Endothelial cell of umbilical vein (primary cell): ENCODE measurements at regions of chr17 and their contacts with region 1.

Region 1: GRCh38 chr17:77054936-77055335 is 85.8 kb upstream of the SEC14L1 start:
- DNase-seq: no peak
- H3K4me3 ChIP-seq: no peak overlapping the region
- H3K27ac ChIP-seq: no peak overlapping the region
- H3K4me1 ChIP-seq: no peaks in the 10 kb centered on the region
- H3K27me3 ChIP-seq: peaks cover 5 to 6% of the 10 kb centered on the region in 2 experiments
- CTCF ChIP-seq: no peak
- POLR2A ChIP-seq: no peak

Region 2: DNA sequence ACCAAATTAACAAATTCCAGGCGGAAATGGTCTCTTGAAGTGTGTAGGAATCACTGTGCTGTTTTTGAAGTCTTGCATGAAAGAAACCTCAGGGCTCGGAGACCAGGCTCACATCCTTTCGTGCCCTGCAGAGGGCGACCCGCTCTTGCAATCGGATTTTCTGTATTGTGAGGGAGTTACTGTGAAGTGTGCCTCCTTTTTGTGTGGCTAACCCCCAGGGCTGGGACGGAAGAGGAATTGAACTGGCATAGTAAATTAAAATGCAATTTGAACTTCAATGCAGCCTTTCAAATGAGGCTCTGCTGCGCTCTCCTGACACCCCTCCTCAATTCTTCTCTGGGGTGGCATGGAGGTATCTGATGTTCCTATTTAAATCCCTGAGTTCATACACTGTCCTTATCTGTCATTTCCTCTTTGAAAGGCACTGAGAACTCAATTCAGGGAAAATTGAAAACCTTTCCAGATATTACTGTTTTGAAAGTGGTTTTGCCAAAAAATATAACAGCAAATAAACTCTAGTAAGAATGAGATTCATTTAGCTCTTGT is 238.3 kb before region 1 on chr17:
- CTCF ChIA-PET with region 1: interaction called, 68 read pairs
- POLR2A ChIA-PET with region 1: no interaction called
- dilution Hi-C with region 1: no loop called
- intact Hi-C with region 1: loop called (anchors 1 kb)
- DNase-seq: peak; percentile 41
- H3K4me3 ChIP-seq: no peak overlapping the region
- H3K27ac ChIP-seq: no peak overlapping the region
- H3K4me1 ChIP-seq: no peaks in the 10 kb centered on the region
- H3K27me3 ChIP-seq: peaks cover 0 to 3% of the 10 kb centered on the region in 2 experiments
- CTCF ChIP-seq: peak; percentile 57 to 73
- POLR2A ChIP-seq: no peak

Region 3: DNA sequence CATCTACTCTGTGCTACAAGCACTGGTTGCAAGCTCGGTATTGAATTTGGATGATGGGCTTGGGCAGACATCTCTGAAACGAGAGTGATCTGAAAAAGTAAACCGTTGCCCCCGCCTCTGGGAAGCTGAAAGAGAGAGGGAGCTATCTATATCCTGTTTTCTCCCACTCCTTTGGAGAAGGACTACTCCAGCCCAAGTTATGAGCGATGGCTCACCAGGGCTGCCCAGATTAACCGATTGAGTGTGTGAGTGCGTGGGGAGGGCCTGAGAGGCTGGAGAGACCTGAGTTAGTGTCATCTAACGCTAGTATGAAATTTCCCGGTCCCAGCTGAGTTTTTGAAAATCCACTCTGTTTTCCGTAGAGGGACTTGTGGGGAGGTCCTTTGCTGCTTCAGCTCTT is 175.2 kb before region 1 on chr17:
- CTCF ChIA-PET with region 1: interaction called, 16 read pairs
- POLR2A ChIA-PET with region 1: no interaction called
- dilution Hi-C with region 1: no loop called
- intact Hi-C with region 1: no loop called
- DNase-seq: no peak
- H3K4me3 ChIP-seq: no peak overlapping the region
- H3K27ac ChIP-seq: no peak overlapping the region
- H3K4me1 ChIP-seq: no peaks in the 10 kb centered on the region
- H3K27me3 ChIP-seq: no peaks in the 10 kb centered on the region
- CTCF ChIP-seq: no peak
- POLR2A ChIP-seq: no peak

Region 4: DNA sequence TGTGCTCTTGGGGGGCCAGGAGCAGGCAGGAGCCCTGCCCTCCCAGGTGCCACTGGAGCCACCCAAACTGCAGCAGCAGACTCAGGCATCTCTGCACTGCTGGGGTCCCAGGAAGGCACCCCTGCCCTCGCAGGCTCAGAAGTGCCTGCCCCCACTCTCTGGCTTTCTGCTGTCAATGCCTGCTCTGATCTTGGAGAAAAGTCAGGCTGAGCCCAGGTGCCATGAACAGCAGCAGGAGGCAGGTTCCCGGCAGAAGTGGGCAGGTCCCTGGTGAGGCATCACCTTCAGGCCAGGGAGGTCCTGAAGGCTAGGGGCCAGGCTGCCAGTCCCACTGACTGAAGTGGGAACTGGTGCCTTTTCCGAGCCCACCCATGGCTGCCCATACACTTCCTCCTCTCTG is 80.2 kb before region 1 on chr17:
- CTCF ChIA-PET with region 1: interaction called, 10 read pairs
- POLR2A ChIA-PET with region 1: no interaction called
- dilution Hi-C with region 1: no loop called
- intact Hi-C with region 1: no loop called
- DNase-seq: no peak
- H3K4me3 ChIP-seq: no peak overlapping the region
- H3K27ac ChIP-seq: no peak overlapping the region
- H3K4me1 ChIP-seq: no peaks in the 10 kb centered on the region
- H3K27me3 ChIP-seq: peaks cover 4 to 11% of the 10 kb centered on the region in 2 experiments
- CTCF ChIP-seq: no peak
- POLR2A ChIP-seq: no peak

Region 5: GRCh38 chr17:77011173-77012011 is 43.5 kb before region 1 on chr17:
- CTCF ChIA-PET with region 1: interaction called, 116 read pairs
- POLR2A ChIA-PET with region 1: no interaction called
- dilution Hi-C with region 1: no loop called
- intact Hi-C with region 1: loop called (anchors 1 kb)
- DNase-seq: peak; percentile 53
- H3K4me3 ChIP-seq: no peak overlapping the region
- H3K27ac ChIP-seq: no peak overlapping the region
- H3K4me1 ChIP-seq: no peaks in the 10 kb centered on the region
- H3K27me3 ChIP-seq: peaks cover 3 to 6% of the 10 kb centered on the region in 2 experiments
- CTCF ChIP-seq: peak; percentile 50 to 56
- POLR2A ChIP-seq: no peak

Region 6: GRCh38 chr17:77036807-77037381 is 18.0 kb before region 1 on chr17:
- CTCF ChIA-PET with region 1: interaction called, 83 read pairs
- POLR2A ChIA-PET with region 1: no interaction called
- dilution Hi-C with region 1: no loop called
- intact Hi-C with region 1: no loop called
- DNase-seq: no peak
- H3K4me3 ChIP-seq: no peak overlapping the region
- H3K27ac ChIP-seq: no peak overlapping the region
- H3K4me1 ChIP-seq: no peaks in the 10 kb centered on the region
- H3K27me3 ChIP-seq: no peaks in the 10 kb centered on the region
- CTCF ChIP-seq: no peak
- POLR2A ChIP-seq: no peak

Region 7: DNA sequence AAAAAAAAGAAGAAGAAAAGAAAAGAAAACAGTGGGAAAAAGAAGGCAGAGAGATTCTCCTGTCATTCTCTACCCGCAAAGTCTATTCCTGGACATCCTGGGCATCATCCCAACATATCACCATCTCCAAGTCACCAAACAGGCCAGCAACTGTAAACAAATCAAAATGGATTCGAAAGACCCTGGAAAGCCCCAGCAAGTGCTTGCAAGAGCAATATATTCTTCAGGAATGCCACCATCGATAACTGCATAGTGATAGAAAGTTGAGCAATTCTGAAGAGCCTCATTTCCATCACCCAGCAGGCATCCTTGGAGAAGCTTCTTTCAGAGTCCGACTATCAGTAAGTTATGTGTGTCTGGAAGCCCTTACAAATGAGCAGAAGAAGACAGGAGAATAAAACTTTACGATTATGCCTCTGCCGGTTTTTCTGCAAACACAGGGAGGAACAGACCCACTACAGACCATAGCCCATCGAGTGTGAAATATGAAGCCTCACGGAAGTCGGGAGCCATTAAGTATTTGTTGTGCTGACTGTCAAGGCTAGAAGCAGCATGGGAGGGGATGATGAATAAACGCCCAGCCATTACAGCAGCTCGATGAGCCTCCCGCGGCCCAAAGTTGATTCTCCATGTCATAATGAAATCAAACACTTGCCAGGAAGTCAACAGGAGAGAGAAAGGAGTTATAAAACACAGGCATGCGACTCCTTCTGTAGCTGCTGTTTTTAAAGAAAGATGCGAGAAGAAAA is 21.4 kb after region 1 on chr17:
- CTCF ChIA-PET with region 1: interaction called, 116 read pairs
- POLR2A ChIA-PET with region 1: no interaction called
- dilution Hi-C with region 1: no loop called
- intact Hi-C with region 1: no loop called
- DNase-seq: no peak
- H3K4me3 ChIP-seq: no peak overlapping the region
- H3K27ac ChIP-seq: no peak overlapping the region
- H3K4me1 ChIP-seq: no peaks in the 10 kb centered on the region
- H3K27me3 ChIP-seq: peaks cover 11 to 14% of the 10 kb centered on the region in 2 experiments
- CTCF ChIP-seq: no peak
- POLR2A ChIP-seq: no peak